ENCODE measurements at regions of chr17 and their contacts with region 1.

Region 1: DNA sequence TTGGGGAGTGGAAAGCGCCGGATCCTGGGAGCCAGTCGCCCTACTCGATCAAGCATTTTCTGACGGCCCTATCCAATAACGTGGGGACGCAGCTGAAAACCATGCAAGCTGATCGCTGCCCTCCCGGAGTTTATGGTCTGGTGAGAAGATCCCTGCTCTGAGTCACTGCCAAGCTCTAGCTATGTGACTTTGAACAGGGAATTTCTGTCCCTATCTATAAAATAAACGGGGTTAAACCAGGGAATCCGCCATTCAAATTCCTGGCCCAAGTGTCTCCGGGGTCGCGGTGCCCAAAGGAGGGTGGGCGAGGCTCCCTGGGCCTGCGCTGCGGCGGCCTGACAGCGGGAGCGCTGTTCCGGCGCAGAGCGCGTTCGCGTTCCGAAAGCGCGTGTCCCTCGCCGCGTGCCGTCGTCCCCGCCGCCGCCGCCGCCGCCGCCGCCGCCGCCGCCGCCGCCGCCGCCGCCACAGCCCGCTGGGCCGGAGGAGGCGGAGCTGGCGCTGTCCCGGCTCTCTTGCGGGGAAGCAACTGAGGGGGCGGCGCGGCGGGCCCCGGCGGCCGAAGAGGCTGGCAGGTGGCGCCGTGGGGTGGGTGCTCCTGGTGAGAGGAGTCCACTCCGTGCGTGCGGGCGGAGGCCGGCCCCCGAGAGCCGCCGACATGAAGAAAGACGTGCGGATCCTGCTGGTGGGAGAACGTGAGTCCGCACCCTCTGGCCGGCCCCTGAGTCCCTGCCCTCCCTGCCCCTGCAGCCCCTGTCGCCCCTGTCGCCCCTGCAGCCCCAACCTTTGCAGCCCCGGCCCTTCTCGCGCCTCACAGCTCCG is at the start of gene RHOT1:
- DNase-seq: peak; percentile 77 to 87 (median 81)
- ATAC-seq: peak; percentile 67 to 77 (median 72)
- H3K4me3 ChIP-seq: peak within 1 kb of the TSS; percentile 67 to 97 (median 85)
- H3K27ac ChIP-seq: peak within 1 kb of the TSS; percentile 85 to 99 (median 94)
- H3K4me1 ChIP-seq: peaks cover 0 to 61% (median 17%) of the 10 kb centered on the region in 12 donors
- H3K27me3 ChIP-seq: no peaks in the 10 kb centered on the region
- CTCF ChIP-seq: peak; percentile 26 to 81 (median 64)
- POLR2A ChIP-seq: peak in 1 of 2 donors; percentile 29
- total RNA-seq, gene RHOT1: 41.5 to 76.8 (median 54.4) TPM

Region 2: DNA sequence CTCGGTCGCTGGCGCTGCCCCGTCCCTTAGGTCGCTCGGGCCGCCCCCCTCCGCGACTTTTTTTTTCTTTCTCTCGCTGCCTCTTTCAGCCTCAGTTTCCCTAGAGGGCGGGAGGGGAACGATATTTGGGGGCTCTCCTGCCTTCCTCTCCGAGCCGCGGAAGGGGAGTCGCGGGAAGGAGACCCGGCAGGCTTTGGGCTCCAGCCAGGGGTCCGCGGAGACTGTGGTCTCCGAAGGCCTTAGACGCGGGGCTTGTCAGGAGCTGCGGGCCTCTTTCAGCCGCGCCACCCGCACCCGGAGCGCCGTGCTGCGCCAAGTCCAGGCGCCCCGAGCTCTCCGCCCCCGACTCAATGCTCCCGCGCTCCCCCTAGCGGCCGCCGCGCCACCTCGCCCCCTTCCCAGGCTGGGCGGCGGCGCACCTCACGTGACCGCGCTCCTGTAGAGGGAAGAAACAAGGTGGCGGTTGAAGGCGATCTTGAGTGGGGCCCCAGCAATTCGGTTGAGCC is 135.2 kb before region 1 on chr17 and contains the start of gene LRRC37B:
- intact Hi-C with region 1: loop called in 9 of 10 experiments (anchors 2 to 10 kb)
- DNase-seq: peak; percentile 87 to 94 (median 90)
- ATAC-seq: peak; percentile 94 to 99 (median 98)
- H3K4me3 ChIP-seq: peak within 1 kb of the TSS; percentile 74 to 99 (median 82)
- H3K27ac ChIP-seq: peak within 1 kb of the TSS; percentile 62 to 92 (median 84)
- H3K4me1 ChIP-seq: peaks cover 0 to 40% (median 17%) of the 10 kb centered on the region in 12 donors
- H3K27me3 ChIP-seq: no peaks in the 10 kb centered on the region
- CTCF ChIP-seq: peak; percentile 94 to 100 (median 97)
- POLR2A ChIP-seq: peak in 1 of 2 donors; percentile 33
- total RNA-seq, gene LRRC37B: 2.3 to 10.6 (median 3.2) TPM

Region 3: GRCh38 chr17:32127158-32127897 is 14.9 kb before region 1 on chr17:
- intact Hi-C with region 1: loop called in 1 of 10 experiments (anchors 2 kb)
- DNase-seq: peak; percentile 86 to 94 (median 91)
- ATAC-seq: peak; percentile 93 to 99 (median 98)
- H3K4me3 ChIP-seq: peak overlapping the region; percentile 38 to 85 (median 66)
- H3K27ac ChIP-seq: peak overlapping the region; percentile 56 to 94 (median 90)
- H3K4me1 ChIP-seq: peaks cover 0 to 21% (median 10%) of the 10 kb centered on the region in 12 donors
- H3K27me3 ChIP-seq: no peaks in the 10 kb centered on the region
- CTCF ChIP-seq: no peak
- POLR2A ChIP-seq: peak in 1 of 2 donors; percentile 48